GM12878 (cell line): ENCODE measurements at regions of chr2 and their contacts with region 1.

Region 1: GRCh38 chr2:96202152-96202854 is 6.3 kb downstream of the STARD7 start:
- DNase-seq: no peak
- ATAC-seq: peak; percentile 3; the same call in 1 of the 3 replicates
- H3K4me3 ChIP-seq: peak overlapping the region; percentile 27; the same call in 1 of the 2 replicates
- H3K27ac ChIP-seq: no peak overlapping the region
- H3K4me1 ChIP-seq: peaks cover 20% of the 10 kb centered on the region
- H3K27me3 ChIP-seq: no peaks in the 10 kb centered on the region
- CTCF ChIP-seq: no peak
- EP300 ChIP-seq: no peak
- POLR2A ChIP-seq: no peak
- RAD21 ChIP-seq: no peak

Region 2: GRCh38 chr2:96106991-96107680 is 95.2 kb before region 1 on chr2:
- CTCF ChIA-PET with region 1: no interaction called
- POLR2A ChIA-PET with region 1: no interaction called
- RAD21 ChIA-PET with region 1: no interaction called
- SMC1A ChIA-PET with region 1: no interaction called
- in situ Hi-C with region 1: no loop called
- intact Hi-C with region 1: no loop called
- DNase-seq: no peak
- ATAC-seq: no peak
- H3K4me3 ChIP-seq: no peak overlapping the region
- H3K27ac ChIP-seq: no peak overlapping the region
- H3K4me1 ChIP-seq: no peaks in the 10 kb centered on the region
- H3K27me3 ChIP-seq: no peaks in the 10 kb centered on the region
- CTCF ChIP-seq: no peak
- EP300 ChIP-seq: no peak
- POLR2A ChIP-seq: no peak
- RAD21 ChIP-seq: no peak

Region 3: GRCh38 chr2:96180521-96180920 is 21.8 kb before region 1 on chr2:
- CTCF ChIA-PET with region 1: interaction called, 36 read pairs
- POLR2A ChIA-PET with region 1: interaction called, 4 read pairs
- RAD21 ChIA-PET with region 1: interaction called, 32 read pairs
- SMC1A ChIA-PET with region 1: interaction called, 29 read pairs
- in situ Hi-C with region 1: no loop called
- intact Hi-C with region 1: no loop called
- DNase-seq: no peak
- ATAC-seq: no peak
- H3K4me3 ChIP-seq: no peak overlapping the region
- H3K27ac ChIP-seq: no peak overlapping the region
- H3K4me1 ChIP-seq: peaks cover 6% of the 10 kb centered on the region
- H3K27me3 ChIP-seq: no peaks in the 10 kb centered on the region
- CTCF ChIP-seq: no peak
- EP300 ChIP-seq: no peak
- POLR2A ChIP-seq: no peak
- RAD21 ChIP-seq: no peak